Sigmoid colon (tissue), 7 donors: ENCODE measurements at regions of chr14 and their contacts with region 1.

Region 1: GRCh38 chr14:93759719-93760307 is 28.5 kb downstream of the PRIMA1 start:
- DNase-seq: peak; percentile 94
- H3K4me3 ChIP-seq: peak overlapping the region in 1 of 4 donors; percentile 2
- H3K27ac ChIP-seq: peak overlapping the region; percentile 74 to 86 (median 85)
- H3K4me1 ChIP-seq: peaks cover 0 to 64% (median 54%) of the 10 kb centered on the region in 4 donors
- H3K27me3 ChIP-seq: no peaks in the 10 kb centered on the region
- CTCF ChIP-seq: no peak
- EP300 ChIP-seq: peak; percentile 67 to 89 (median 75)
- POLR2A ChIP-seq: no peak

Region 2: GRCh38 chr14:93619176-93619793 is 140.5 kb before region 1 on chr14:
- intact Hi-C with region 1: no loop called
- DNase-seq: no peak
- H3K4me3 ChIP-seq: no peak overlapping the region
- H3K27ac ChIP-seq: no peak overlapping the region
- H3K4me1 ChIP-seq: peaks cover 0 to 5% (median 0%) of the 10 kb centered on the region in 4 donors
- H3K27me3 ChIP-seq: no peaks in the 10 kb centered on the region
- CTCF ChIP-seq: peak in 3 of 4 experiments; percentile 11 to 26 (median 25)
- EP300 ChIP-seq: no peak
- POLR2A ChIP-seq: no peak

Region 3: DNA sequence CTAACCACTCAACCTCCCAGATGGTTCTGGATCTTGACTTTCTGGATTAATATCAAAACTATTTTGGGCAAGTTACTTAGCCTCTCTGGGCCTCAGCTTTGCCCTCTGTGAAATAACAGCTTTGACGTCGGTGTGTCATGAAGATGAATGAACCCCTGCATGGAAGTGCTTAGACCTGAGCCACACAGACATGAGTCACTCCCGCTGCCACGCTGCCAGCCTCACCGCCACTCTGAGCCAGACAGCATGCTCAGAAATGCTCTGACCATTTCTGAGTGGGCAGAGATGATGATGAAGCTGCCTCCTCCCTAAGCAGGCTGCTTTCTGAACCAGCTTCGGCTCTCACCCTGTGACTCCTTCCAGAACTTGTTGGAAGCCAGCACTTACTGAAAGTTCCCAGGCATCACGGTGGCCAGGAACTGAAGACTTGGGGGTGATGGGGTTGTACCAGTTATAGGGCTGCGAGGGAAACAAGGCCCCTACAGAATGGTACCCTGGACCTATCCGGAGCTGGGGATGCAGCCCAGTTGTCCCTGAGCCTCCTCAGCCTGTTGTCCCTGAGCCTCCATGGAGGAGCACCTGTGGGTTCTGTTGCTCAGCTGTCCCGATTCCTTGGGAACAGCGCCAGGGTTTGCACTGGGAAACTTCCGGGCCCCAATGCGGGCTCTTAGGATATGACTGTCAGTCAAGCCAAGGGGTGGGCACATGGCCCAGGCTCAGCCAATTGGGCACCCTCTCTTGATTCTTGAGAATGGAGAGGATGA is 235.3 kb after region 1 on chr14:
- intact Hi-C with region 1: loop called (anchors 5 kb)
- DNase-seq: peak; percentile 92
- H3K4me3 ChIP-seq: no peak overlapping the region
- H3K27ac ChIP-seq: peak overlapping the region; percentile 75 to 84 (median 78)
- H3K4me1 ChIP-seq: peaks cover 0 to 35% (median 25%) of the 10 kb centered on the region in 4 donors
- H3K27me3 ChIP-seq: no peaks in the 10 kb centered on the region
- CTCF ChIP-seq: no peak
- EP300 ChIP-seq: peak in 2 of 4 donors; percentile 77 to 88
- POLR2A ChIP-seq: no peak

Region 4: DNA sequence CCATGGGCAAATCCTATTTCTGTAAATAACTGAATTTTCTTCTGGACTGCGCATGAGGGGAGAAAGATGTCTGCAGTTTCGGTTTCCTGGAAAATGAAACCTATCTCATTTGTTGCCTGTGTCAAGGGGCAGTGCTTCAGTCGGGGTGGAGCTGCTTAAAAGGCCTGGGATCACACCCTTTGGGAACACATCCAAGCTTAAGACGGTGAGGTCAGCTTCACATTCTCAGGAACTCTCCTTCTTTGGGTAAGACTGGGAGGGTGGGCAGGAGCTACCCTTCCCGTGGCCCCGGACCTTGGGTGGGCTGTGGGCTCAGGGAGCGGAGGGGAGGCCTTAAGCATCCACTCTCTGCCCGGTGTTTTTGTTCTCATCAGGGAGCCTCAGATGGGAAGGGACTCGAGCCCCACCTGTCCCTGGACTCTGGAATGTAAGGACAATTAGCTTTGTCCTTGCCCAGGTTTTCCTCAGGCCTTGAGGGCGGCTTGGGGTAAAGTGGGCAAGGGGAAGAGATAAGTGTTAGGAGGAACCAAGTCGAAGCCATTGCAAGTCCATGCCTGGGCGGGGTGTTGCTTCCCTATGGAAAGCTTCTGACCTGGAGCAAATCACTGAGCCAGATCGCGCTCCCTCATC is 350.9 kb after region 1 on chr14 and contains the start of gene IFI27:
- intact Hi-C with region 1: no loop called
- DNase-seq: peak; percentile 76
- H3K4me3 ChIP-seq: peak within 1 kb of the TSS in 3 of 4 donors; percentile 30 to 33 (median 33)
- H3K27ac ChIP-seq: peak within 1 kb of the TSS; percentile 61 to 77 (median 64)
- H3K4me1 ChIP-seq: peaks cover 0 to 11% (median 0%) of the 10 kb centered on the region in 4 donors
- H3K27me3 ChIP-seq: no peaks in the 10 kb centered on the region
- CTCF ChIP-seq: no peak
- EP300 ChIP-seq: no peak
- POLR2A ChIP-seq: peak in 1 of 2 donors; percentile 46
- total RNA-seq, gene IFI27: 25.2 to 183 (median 98.3) TPM

Region 5: DNA sequence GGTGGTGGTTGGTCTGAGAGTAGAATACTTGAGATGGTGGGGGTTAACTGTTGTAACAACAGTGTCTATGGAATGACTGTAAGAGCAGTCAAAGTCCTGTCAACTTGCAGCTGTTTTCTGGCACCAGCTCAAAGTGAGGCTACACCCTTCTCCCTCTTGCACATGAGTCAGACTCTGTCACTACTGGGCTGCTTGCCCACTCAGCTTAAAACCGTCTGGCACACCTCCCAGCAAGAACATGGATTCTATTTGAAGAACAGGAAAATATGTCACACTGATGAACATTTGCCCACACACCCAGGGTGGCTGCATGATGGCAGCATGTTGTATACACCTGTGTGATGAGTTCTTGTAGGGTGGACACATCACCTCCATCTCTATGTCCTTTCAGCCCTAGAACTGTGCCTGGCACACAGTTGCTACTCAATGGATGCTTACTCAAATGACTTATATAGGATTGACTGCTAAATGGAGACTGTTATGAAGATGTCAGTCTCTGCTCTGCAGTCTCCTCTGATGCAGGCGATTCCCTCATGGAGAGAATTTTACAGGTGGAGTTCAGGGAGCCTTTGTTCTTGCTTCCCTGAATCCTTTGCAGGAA is 582.6 kb after region 1 on chr14:
- intact Hi-C with region 1: no loop called
- DNase-seq: peak; percentile 89
- H3K4me3 ChIP-seq: no peak overlapping the region
- H3K27ac ChIP-seq: peak overlapping the region in 1 of 4 donors; percentile 14
- H3K4me1 ChIP-seq: peaks cover 0 to 11% (median 10%) of the 10 kb centered on the region in 4 donors
- H3K27me3 ChIP-seq: no peaks in the 10 kb centered on the region
- CTCF ChIP-seq: no peak
- EP300 ChIP-seq: no peak
- POLR2A ChIP-seq: no peak